OCI-LY7 (cell line): ENCODE measurements at regions of chr9 and their contacts with region 1.

Region 1: DNA sequence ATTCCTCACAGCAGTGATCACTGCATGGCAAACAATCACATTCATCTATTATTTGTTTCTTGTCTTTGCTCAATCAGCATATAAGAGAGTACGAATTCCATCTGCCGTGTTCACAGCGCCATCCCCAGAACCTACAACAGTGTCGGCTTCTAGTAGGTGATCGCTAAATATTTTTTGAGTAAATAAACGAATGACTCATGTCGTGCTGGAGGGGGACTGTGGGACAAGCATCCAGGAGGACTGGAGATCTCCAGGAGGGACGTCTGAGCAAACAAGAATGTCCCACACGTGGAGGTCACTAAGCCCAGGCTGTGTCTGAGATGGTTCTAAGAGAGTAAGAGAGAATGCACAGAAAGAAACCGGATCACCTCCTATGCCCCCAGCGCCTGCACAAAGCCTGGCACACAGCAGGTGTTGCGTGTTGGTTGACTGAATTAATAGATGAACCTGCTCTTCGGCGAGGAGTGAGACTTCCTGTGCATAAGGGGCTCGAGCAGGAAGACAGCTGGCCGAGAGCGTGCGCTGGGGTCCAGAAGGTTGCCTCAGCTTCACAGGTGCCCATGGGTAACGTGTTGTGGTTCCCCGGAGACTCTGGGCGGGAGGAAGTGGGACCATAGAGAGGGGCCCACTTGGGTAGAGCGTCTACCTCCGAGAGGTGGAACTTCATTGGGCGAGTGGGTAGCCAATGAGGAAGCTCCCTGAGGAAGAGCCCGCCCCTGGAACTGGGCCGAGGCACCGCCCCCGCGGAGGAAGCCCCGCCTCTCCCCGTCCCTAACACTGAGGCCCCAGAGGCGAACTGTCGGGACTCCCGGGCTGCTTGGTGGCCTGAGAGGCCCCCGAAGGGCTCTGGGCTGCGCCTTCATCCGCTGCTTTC is 193.0 kb downstream of the MELK start:
- DNase-seq: peak; percentile 100
- H3K4me3 ChIP-seq: peak overlapping the region; percentile 54
- H3K27ac ChIP-seq: peak overlapping the region; percentile 94
- H3K4me1 ChIP-seq: peaks cover 19% of the 10 kb centered on the region
- CTCF ChIP-seq: no peak

Region 2: DNA sequence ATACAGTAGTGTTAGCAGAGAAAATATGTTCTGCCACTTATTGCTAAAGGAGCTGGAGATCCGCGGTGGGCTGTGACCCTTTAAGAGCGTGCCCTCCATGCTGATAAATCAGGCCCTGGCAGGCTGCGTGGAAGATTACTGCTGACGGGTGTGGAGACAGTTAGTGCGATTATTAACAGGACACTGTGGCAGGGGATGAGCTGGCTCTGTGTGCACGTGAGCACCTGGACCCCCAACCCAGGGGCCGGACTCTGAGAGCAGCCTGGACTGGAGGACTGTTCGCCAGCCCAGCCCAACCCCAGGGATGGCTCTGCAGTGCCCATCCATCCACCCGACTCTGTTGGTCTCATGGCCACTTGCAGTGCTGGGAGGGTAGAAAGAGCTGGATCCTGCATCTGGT is 31.0 kb before region 1 on chr9:
- CTCF ChIA-PET with region 1: no interaction called
- POLR2A ChIA-PET with region 1: no interaction called
- intact Hi-C with region 1: no loop called
- DNase-seq: no peak
- H3K4me3 ChIP-seq: no peak overlapping the region
- H3K27ac ChIP-seq: no peak overlapping the region
- H3K4me1 ChIP-seq: peaks cover 16% of the 10 kb centered on the region
- CTCF ChIP-seq: no peak

Region 3: GRCh38 chr9:36802191-36802920 is 36.7 kb after region 1 on chr9:
- CTCF ChIA-PET with region 1: no interaction called
- POLR2A ChIA-PET with region 1: no interaction called
- intact Hi-C with region 1: no loop called
- DNase-seq: no peak
- H3K4me3 ChIP-seq: no peak overlapping the region
- H3K27ac ChIP-seq: no peak overlapping the region
- H3K4me1 ChIP-seq: no peaks in the 10 kb centered on the region
- CTCF ChIP-seq: no peak

Region 4: GRCh38 chr9:37141015-37141414 is 375.3 kb after region 1 on chr9:
- CTCF ChIA-PET with region 1: no interaction called
- POLR2A ChIA-PET with region 1: no interaction called
- intact Hi-C with region 1: no loop called
- DNase-seq: peak; percentile 62
- H3K4me3 ChIP-seq: peak overlapping the region; percentile 61
- H3K27ac ChIP-seq: peak overlapping the region; percentile 74
- H3K4me1 ChIP-seq: peaks cover 98% of the 10 kb centered on the region
- CTCF ChIP-seq: no peak

Region 5: DNA sequence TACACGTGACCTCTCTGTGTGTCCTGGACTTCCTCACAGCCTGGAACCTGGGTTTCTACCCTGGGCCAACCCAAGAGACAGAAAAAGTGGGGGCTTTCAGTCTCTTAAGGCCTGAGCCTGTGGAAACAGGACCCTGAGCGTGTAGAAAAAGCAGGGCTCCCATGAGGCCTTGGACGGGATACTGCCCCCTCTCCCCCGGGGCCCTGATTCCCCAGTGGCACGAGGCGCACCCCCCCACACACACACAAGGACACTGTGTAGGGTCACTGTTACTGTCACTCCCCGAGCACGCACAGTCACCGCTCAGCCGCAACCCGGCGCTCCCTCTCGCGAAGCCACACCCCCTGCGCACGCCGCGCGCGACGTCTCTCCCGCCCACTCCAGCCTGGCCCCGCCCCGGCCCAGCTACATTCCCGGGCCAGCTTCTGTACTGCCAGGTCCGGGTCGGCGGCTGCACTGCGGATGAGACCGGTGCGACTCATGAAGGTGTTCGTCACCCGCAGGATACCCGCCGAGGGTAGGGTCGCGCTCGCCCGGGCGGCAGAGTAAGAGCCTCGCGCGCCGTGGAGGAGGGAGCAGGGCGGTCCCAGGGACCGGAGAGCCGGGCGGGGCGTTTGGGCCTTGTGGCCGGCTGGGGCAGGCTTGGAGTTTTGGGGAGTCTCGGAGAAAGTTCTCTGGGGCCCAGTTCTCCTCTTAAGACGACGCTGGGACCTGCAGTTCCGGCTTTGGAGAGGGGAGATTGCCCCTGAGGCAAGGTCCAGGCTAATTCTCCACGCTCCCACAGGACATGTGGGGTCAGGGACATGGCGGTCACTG is 656.8 kb after region 1 on chr9 and contains the start of gene GRHPR:
- CTCF ChIA-PET with region 1: no interaction called
- POLR2A ChIA-PET with region 1: no interaction called
- intact Hi-C with region 1: loop called (anchors 10 kb)
- DNase-seq: peak; percentile 85
- H3K4me3 ChIP-seq: peak within 1 kb of the TSS; percentile 82
- H3K27ac ChIP-seq: peak within 1 kb of the TSS; percentile 55
- H3K4me1 ChIP-seq: peaks cover 55% of the 10 kb centered on the region
- CTCF ChIP-seq: no peak
- total RNA-seq, gene GRHPR: 135 and 148 TPM in 2 replicates